T-cell (primary cell): ENCODE measurements at regions of chr16 and their contacts with region 1.

Region 1: GRCh38 chr16:31868691-31869167 is 4.9 kb upstream of the ZNF267 start:
- DNase-seq: peak; percentile 37 to 86 (median 73)
- ATAC-seq: peak; percentile 13 to 34 (median 20)
- H3K4me3 ChIP-seq: peak overlapping the region; percentile 34 to 48
- H3K4me3 Mint-ChIP-seq: peak overlapping the region; percentile 59 to 68 (median 64)
- H3K27ac ChIP-seq: peak overlapping the region; percentile 82
- H3K27ac Mint-ChIP-seq: peak overlapping the region; percentile 83 to 84
- H3K4me1 ChIP-seq: peaks cover 29 to 39% of the 10 kb centered on the region in 2 experiments
- H3K4me1 Mint-ChIP-seq: peaks cover 39 to 53% (median 51%) of the 10 kb centered on the region in 3 donors
- H3K27me3 ChIP-seq: no peaks in the 10 kb centered on the region
- H3K27me3 Mint-ChIP-seq: no peaks in the 10 kb centered on the region

Region 2: DNA sequence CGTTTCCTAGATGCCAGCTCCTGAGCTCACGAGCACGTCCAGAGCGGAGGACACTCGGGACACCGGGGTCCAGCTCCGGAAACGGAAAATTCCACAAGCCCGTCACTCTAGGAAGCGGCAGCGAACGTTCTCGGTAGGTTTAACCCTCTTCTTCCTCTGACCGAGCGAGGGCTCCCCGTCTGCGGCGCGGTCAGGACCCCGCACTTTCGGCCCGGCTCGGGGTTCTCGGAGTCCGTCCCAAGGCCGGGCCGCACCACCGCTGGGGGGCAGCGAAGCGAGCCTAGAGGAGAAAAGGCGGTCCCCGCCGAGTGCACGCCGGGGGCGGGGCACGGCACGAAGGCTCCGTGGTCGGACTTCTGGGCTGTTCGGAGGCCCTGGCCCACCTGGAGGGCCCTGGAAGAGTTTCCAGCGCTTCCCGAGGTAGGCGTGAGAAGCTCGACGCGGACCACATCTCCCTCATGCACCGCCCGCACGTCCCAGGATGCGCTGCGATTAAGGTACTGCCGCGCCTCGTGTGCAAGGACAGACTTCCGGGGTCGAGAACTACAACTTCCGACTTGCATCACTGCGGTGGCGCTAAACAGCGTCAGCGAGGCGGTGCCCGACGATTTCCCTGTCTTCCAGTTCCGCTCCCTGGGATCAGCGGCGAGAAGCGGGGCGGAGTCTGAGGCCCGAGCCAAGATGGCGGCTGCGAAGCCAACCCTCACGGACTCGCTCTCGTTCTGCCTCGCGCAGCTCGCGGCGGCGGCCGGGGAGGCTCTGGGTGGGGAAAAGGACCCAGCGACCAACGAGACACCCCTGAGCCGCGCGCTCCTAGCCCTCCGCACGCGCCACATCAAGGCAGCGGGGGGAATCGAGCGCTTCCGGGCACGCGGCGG is 409.6 kb before region 1 on chr16 and contains the start of gene ARMC5:
- CTCF ChIA-PET with region 1: interaction called in 1 of 2 experiments, 10 read pairs
- POLR2A ChIA-PET with region 1: interaction called in 1 of 2 experiments, 14 read pairs
- DNase-seq: peak; percentile 92 to 99 (median 95)
- ATAC-seq: peak; percentile 76 to 79 (median 78)
- H3K4me3 ChIP-seq: peak within 1 kb of the TSS; percentile 81 to 88
- H3K4me3 Mint-ChIP-seq: peak within 1 kb of the TSS; percentile 87 to 90 (median 89)
- H3K27ac ChIP-seq: peak within 1 kb of the TSS; percentile 97
- H3K27ac Mint-ChIP-seq: peak within 1 kb of the TSS; percentile 97 to 99
- H3K4me1 ChIP-seq: peaks cover 21 to 60% of the 10 kb centered on the region in 2 experiments
- H3K4me1 Mint-ChIP-seq: peaks cover 36 to 48% (median 46%) of the 10 kb centered on the region in 3 donors
- H3K27me3 ChIP-seq: no peaks in the 10 kb centered on the region
- H3K27me3 Mint-ChIP-seq: no peaks in the 10 kb centered on the region
- total RNA-seq, gene ARMC5: 9.3 to 16.6 (median 10.2) TPM

Region 3: GRCh38 chr16:31696968-31697743 is 171.6 kb before region 1 on chr16:
- CTCF ChIA-PET with region 1: interaction called in 1 of 2 experiments, 13 read pairs
- POLR2A ChIA-PET with region 1: interaction called in 1 of 2 experiments, 3 read pairs
- DNase-seq: peak in 1 of 35 experiments; percentile 29
- ATAC-seq: no peak
- H3K4me3 ChIP-seq: no peak overlapping the region
- H3K4me3 Mint-ChIP-seq: no peak overlapping the region
- H3K27ac ChIP-seq: no peak overlapping the region
- H3K27ac Mint-ChIP-seq: no peak overlapping the region
- H3K4me1 ChIP-seq: peaks cover 20 to 31% of the 10 kb centered on the region in 2 experiments
- H3K4me1 Mint-ChIP-seq: peaks cover 14 to 34% (median 21%) of the 10 kb centered on the region in 3 donors
- H3K27me3 ChIP-seq: no peaks in the 10 kb centered on the region
- H3K27me3 Mint-ChIP-seq: no peaks in the 10 kb centered on the region

Region 4: GRCh38 chr16:31713071-31713944 is 155.4 kb before region 1 on chr16:
- CTCF ChIA-PET with region 1: interaction called in 1 of 2 experiments, 15 read pairs
- POLR2A ChIA-PET with region 1: interaction called, 3 to 9 read pairs
- DNase-seq: peak; percentile 82 to 95 (median 92)
- ATAC-seq: peak; percentile 89 to 95 (median 90)
- H3K4me3 ChIP-seq: peak overlapping the region; percentile 94 to 100
- H3K4me3 Mint-ChIP-seq: peak overlapping the region; percentile 99 to 100 (median 99)
- H3K27ac ChIP-seq: peak overlapping the region; percentile 94
- H3K27ac Mint-ChIP-seq: peak overlapping the region; percentile 98 to 99
- H3K4me1 ChIP-seq: peaks cover 16 to 52% of the 10 kb centered on the region in 2 experiments
- H3K4me1 Mint-ChIP-seq: peaks cover 59 to 64% (median 62%) of the 10 kb centered on the region in 3 donors
- H3K27me3 ChIP-seq: no peaks in the 10 kb centered on the region
- H3K27me3 Mint-ChIP-seq: no peaks in the 10 kb centered on the region